HCT116 (cell line): ENCODE measurements at regions of chr1 and their contacts with region 1.

Region 1: DNA sequence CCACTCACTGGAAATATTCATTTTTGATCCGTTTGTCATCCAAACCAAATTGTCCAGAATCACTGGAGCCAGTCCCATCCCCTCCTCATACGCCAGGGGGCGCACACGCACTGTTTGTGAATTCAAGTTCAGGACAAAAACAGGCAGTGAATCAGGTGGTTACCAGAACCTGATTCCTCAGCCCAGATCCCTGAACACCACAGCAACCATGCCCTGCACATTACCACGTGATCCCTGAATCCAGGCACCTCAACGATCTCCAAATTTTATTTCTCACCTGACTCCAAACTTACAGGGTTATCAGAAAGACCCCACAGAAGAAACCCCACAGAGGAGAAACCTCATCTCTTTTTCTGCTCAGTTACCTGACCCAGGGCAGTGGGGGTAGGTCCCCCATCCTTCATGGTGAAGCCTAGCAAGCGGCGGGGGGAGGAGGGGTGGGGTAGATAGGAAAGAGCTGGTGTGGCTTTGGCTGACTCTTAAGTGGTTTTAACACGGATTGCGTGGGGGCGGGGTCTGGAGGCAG is 1.4 kb upstream of the PTPRF start:
- DNase-seq: peak; percentile 84
- ATAC-seq: peak; percentile 56
- H3K4me3 ChIP-seq: no peak overlapping the region
- H3K27ac ChIP-seq: no peak overlapping the region
- H3K4me1 ChIP-seq: peaks cover 26 to 71% of the 10 kb centered on the region in 2 experiments
- H3K27me3 ChIP-seq: no peaks in the 10 kb centered on the region
- CTCF ChIP-seq: peak in 2 of 3 experiments; percentile 94 to 97; a peak in 4 of 6 replicates
- POLR2A ChIP-seq: no peak
- RAD21 ChIP-seq: no peak

Region 2: DNA sequence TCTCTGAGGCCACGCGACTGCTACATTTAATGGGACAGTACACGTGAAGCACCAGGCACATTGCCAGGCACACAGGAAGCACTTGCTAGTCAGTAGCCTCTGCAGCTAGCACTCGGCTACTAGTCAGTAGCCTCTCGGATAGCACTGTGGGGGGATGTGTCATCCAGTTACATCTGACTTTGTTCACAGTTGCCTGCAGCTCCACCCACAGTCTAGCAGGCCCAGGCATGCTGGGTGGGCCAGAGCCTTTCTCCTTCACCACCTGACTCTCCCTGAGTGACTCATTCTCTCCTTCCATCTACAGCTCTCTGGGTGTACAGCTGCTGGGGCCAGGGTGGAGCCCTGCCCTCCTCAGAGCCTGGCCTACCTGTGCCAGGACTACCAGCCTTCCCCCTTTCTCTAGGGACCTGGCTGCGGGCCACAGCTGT is 52.9 kb after region 1 on chr1:
- CTCF ChIA-PET with region 1: interaction called, 3 read pairs
- POLR2A ChIA-PET with region 1: no interaction called
- RAD21 ChIA-PET with region 1: no interaction called
- intact Hi-C with region 1: loop called (anchors 2 kb)
- DNase-seq: peak; percentile 93
- ATAC-seq: peak; percentile 98
- H3K4me3 ChIP-seq: peak overlapping the region in 1 of 2 experiments; percentile 12; a peak in 1 of 4 replicates
- H3K27ac ChIP-seq: peak overlapping the region; percentile 92
- H3K4me1 ChIP-seq: peaks cover 19 to 34% of the 10 kb centered on the region in 2 experiments
- H3K27me3 ChIP-seq: no peaks in the 10 kb centered on the region
- CTCF ChIP-seq: no peak
- POLR2A ChIP-seq: no peak
- RAD21 ChIP-seq: peak; percentile 47

Region 3: GRCh38 chr1:43750083-43750482 is 220.8 kb after region 1 on chr1:
- CTCF ChIA-PET with region 1: no interaction called
- POLR2A ChIA-PET with region 1: no interaction called
- RAD21 ChIA-PET with region 1: no interaction called
- intact Hi-C with region 1: loop called (anchors 5 kb)
- DNase-seq: no peak
- ATAC-seq: no peak
- H3K4me3 ChIP-seq: no peak overlapping the region
- H3K27ac ChIP-seq: no peak overlapping the region
- H3K4me1 ChIP-seq: peaks cover 0 to 4% of the 10 kb centered on the region in 2 experiments; a peak in 1 of 4 replicates
- H3K27me3 ChIP-seq: no peaks in the 10 kb centered on the region
- CTCF ChIP-seq: no peak
- POLR2A ChIP-seq: no peak
- RAD21 ChIP-seq: no peak